ENCODE measurements at regions of chr18 and their contacts with region 1.

Region 1: DNA sequence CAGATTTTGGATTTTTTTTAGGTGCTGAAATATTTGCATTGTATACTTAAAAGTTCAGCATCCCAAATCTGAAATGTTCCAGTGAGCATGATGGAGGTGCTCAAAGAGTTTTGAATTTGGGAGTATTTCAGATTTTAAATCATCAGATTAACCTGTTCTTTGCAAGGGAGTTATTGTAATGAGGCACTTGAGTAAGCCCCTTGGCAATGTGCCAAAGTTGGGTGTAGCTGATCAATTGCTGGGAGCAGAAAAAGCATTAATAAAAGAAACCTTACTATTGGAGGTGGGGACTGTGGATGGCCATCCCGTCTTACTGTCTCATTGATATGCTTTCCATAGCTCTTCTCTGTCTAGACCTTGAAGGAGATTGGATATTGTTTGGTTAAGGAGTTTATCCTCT is 28.3 kb downstream of the MALT1 start:
- DNase-seq: no peak
- H3K4me3 ChIP-seq: no peak overlapping the region
- CTCF ChIP-seq: no peak

Region 2: GRCh38 chr18:58714259-58714658 is 14.7 kb after region 1 on chr18:
- CTCF ChIA-PET with region 1: interaction called, 15 read pairs
- POLR2A ChIA-PET with region 1: no interaction called
- DNase-seq: no peak
- H3K4me3 ChIP-seq: no peak overlapping the region
- CTCF ChIP-seq: no peak